ENCODE measurements at regions of chrX and their contacts with region 1.

Region 1: DNA sequence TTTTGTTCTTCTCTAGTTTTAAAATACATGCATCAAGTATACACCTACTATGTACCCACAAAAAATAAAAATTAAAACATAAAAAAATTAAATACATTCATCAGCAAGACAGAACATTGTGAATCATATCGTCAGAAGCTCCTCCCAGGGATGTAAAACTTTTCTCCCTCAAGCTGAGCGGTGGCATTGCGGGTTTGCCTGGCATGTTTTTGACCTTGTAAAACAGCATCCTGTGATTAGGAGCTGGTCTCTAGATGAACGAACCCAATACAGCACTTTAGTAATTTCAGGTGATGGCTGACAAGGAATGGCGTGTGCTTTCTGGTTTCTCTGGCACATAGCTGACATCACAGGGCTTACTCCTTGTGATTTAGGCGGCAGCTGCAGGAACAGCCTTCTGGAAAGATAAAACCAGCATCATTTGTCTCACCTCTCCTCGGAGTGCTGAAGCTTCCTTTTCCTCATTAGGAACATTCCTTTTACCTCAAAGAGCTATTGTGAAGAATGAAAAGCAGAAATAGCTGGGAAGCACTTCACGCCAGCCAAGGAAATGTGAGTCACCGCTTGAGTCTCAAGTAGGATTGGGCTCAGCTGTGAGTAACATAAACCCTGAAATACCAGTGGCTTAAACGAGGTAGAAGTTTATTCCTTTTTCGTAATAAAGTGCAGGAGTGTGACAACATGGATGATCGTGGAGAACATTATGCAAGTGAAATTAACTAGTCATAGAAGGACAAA is 44.3 kb downstream of the NYX start:
- DNase-seq: peak; percentile 96
- ATAC-seq: peak; percentile 90
- H3K4me3 ChIP-seq: peak overlapping the region; percentile 9; the same call in 1 of the 2 replicates
- H3K27ac ChIP-seq: peak overlapping the region; percentile 78
- H3K4me1 ChIP-seq: peaks cover 3% of the 10 kb centered on the region; the same call in 1 of the 2 replicates
- H3K27me3 ChIP-seq: no peaks in the 10 kb centered on the region
- CTCF ChIP-seq: no peak
- POLR2A ChIP-seq: no peak
- RAD21 ChIP-seq: no peak

Region 2: GRCh38 chrX:41435708-41436107 is 55.7 kb before region 1 on chrX:
- CTCF ChIA-PET with region 1: no interaction called
- POLR2A ChIA-PET with region 1: interaction called, 25 read pairs
- dilution Hi-C with region 1: no loop called
- in situ Hi-C with region 1: no loop called
- intact Hi-C with region 1: no loop called
- DNase-seq: no peak
- ATAC-seq: no peak
- H3K4me3 ChIP-seq: no peak overlapping the region
- H3K27ac ChIP-seq: no peak overlapping the region
- H3K4me1 ChIP-seq: no peaks in the 10 kb centered on the region
- H3K27me3 ChIP-seq: peaks cover 2% of the 10 kb centered on the region; the same call in 1 of the 2 replicates
- CTCF ChIP-seq: no peak
- POLR2A ChIP-seq: no peak
- RAD21 ChIP-seq: no peak

Measured in IMR-90 (cell line).